GM10248 (cell line): ENCODE measurements at regions of chr11 and their contacts with region 1.

Region 1: DNA sequence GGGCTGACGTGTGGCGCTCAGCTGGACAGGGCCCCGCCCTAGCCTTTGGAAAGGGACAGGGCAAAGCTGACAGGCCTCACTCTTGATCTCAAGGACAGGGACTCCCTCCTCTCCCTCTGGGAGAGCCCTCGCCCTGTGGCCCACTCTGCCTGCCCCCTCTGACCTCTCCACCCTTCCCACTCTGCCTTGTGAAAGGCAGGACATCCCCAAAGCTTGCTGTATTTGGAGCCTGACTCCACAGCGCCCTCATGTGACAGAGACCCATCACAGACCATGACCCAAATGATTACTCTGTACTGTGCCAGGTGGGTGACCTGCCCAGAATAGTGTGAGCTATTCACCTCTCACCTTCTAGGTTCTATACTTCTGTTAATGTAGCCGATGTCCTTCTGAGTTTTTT is 18.8 kb downstream of the P2RY2 start:
- DNase-seq: peak; percentile 79
- CTCF ChIP-seq: peak; percentile 83

Region 2: DNA sequence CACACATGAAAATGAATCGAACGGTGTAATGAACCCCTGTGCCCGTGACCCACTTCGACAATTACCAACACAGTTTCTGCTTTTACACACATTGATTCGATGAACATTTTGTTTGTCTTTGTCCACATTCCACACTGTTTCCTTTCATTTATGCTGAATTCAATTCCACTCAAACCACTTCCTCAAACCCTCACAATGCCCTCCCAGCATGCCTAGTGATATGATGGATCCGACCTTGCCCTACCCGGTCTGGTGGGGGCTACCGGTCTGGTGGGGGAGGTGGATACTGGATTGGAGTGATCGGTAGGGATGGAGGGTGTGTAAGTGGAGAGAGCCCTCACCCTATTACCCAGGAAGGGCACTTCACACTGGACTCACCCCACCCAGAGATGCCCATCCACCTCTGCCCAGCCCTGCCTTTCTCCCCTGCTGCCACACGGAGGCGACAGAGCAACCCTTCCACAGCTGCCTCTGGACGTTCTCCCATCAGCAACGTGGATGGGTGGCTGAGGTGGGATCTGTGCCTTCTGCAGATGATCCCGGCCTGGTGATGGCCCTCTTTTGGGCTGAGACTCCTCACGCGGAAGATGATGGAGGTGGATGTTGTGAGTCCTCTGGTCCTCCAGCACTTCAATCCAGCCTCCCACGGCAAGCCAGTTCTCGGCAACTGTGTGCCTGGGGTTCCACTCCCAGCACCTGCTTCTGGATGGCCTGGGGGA is 51.7 kb before region 1 on chr11:
- CTCF ChIA-PET with region 1: interaction called, 90 read pairs
- POLR2A ChIA-PET with region 1: no interaction called
- DNase-seq: peak; percentile 72
- CTCF ChIP-seq: peak; percentile 95

Region 3: GRCh38 chr11:73201249-73201648 is 35.6 kb before region 1 on chr11:
- CTCF ChIA-PET with region 1: interaction called, 15 read pairs
- POLR2A ChIA-PET with region 1: no interaction called
- DNase-seq: no peak
- CTCF ChIP-seq: no peak

Region 4: GRCh38 chr11:73218106-73218829 is 18.6 kb before region 1 on chr11 and contains the start of gene P2RY2:
- CTCF ChIA-PET with region 1: interaction called, 22 read pairs
- POLR2A ChIA-PET with region 1: no interaction called
- DNase-seq: peak; percentile 58
- CTCF ChIP-seq: peak; percentile 43

Region 5: DNA sequence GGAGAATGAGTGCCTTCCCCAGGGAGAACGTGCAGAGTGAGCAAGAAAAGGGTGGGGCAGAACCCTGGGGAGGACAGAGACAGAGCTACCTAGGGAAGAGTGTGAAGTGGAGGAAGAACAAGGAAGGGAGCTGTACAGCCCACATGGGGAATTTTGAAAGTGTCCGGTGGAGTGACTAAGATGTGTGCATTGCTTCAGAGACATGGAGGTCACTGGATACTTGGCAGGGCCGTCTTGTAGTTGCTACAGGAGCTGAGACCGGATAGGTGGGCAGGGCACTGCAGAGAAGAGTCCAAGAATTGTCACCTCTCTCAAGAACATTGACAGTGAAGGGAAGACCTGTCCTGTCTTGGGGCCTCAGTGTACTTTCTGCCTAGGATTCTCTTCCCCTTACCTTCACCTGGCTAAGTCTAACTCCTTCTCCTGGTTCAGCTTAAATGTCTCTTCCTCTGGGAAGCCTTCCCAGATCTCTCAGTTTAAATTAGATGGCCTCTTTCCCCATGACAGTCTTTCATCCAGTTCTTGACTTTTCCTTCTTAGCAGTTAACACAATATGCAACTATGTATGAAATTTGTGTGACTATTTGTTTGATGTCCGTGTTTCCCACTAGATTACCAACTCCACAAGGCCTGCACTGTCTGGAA is 26.1 kb after region 1 on chr11:
- CTCF ChIA-PET with region 1: interaction called, 10 read pairs
- POLR2A ChIA-PET with region 1: no interaction called
- DNase-seq: no peak
- CTCF ChIP-seq: no peak

Region 6: GRCh38 chr11:73335204-73335923 is 98.5 kb after region 1 on chr11:
- CTCF ChIA-PET with region 1: interaction called, 17 read pairs
- POLR2A ChIA-PET with region 1: no interaction called
- DNase-seq: peak; percentile 84
- CTCF ChIP-seq: peak; percentile 99